Esophagus squamous epithelium (tissue), 5 donors: ENCODE measurements at regions of chr4 and their contacts with region 1.

Region 1: GRCh38 chr4:37977471-37978247 is 17.5 kb downstream of the PTTG2 start:
- DNase-seq: peak; percentile 4
- H3K4me3 ChIP-seq: peak overlapping the region; percentile 62 to 85 (median 70)
- H3K27ac ChIP-seq: peak overlapping the region; percentile 86 to 96 (median 90)
- H3K4me1 ChIP-seq: peaks cover 0 to 41% (median 6%) of the 10 kb centered on the region in 3 donors
- H3K27me3 ChIP-seq: no peaks in the 10 kb centered on the region
- CTCF ChIP-seq: peak; percentile 26 to 72 (median 52)
- POLR2A ChIP-seq: peak in 2 of 4 donors; percentile 12 to 22

Region 2: GRCh38 chr4:37837446-37837845 is 140.2 kb before region 1 on chr4:
- intact Hi-C with region 1: loop called (anchors 10 kb)
- DNase-seq: no peak
- H3K4me3 ChIP-seq: no peak overlapping the region
- H3K27ac ChIP-seq: peak overlapping the region; percentile 14 to 55 (median 29)
- H3K4me1 ChIP-seq: peaks cover 0 to 27% (median 3%) of the 10 kb centered on the region in 3 donors
- H3K27me3 ChIP-seq: no peaks in the 10 kb centered on the region
- CTCF ChIP-seq: no peak
- POLR2A ChIP-seq: no peak

Region 3: DNA sequence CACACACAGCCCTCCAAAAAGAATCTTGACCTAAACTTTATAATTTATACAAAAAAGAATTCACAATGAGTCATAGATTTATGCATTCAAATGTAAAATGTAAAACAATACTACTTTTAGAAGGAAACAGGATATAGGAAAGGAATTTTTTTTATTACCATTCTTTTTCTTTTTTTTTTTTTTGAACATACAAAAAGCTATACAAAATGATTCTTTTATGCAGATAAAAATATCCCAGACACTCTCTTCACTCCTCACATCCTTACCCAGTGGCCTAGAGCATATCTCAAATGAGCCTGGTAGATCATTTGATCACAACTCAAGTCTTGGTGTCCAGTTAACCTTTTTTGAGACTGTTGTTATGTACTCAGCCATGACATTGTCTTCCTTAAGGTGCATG is 379.0 kb after region 1 on chr4:
- intact Hi-C with region 1: no loop called
- DNase-seq: no peak
- H3K4me3 ChIP-seq: no peak overlapping the region
- H3K27ac ChIP-seq: no peak overlapping the region
- H3K4me1 ChIP-seq: peaks cover 0 to 25% (median 7%) of the 10 kb centered on the region in 3 donors
- H3K27me3 ChIP-seq: no peaks in the 10 kb centered on the region
- CTCF ChIP-seq: no peak
- POLR2A ChIP-seq: no peak